K562 (cell line): ENCODE measurements at regions of chr10 and their contacts with region 1.

Region 1: DNA sequence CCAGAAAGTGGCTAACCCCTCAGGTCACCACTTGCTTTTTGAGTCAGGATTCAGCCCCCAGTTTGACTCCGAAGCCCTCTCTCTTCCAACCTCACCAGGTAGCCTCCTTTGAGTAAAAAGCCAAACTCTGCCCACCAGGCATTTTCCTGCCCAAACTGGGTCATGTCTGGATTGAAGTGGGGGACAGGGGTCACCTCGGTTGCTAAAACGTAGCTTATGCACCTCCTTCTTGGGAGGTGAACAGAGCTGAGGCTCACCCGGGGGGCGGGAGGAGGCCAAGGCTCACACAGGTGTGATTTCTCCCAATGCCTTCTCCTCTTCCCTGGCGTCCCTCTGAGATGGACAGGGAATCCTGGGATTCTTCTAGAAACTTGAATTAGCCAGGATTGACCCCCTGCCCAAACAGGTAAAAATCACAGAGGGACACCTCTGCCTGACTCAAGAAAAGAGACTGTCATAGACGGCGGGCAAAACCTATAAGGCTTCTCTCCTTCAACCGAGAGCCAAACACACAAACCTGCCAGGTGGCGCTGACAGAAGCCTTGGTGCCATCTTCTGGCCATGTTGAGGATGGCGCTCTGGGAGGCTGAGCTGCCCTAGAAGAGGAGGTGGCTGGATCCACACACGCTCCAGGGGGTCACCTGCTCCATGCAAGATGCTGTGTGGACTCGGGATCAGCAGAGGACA is 51.6 kb downstream of the PRLHR start:
- DNase-seq: peak; percentile 19 to 58 (median 38)
- ATAC-seq: peak; percentile 92
- H3K4me3 ChIP-seq: no peak overlapping the region
- H3K27ac ChIP-seq: no peak overlapping the region
- H3K4me1 ChIP-seq: no peaks in the 10 kb centered on the region
- H3K27me3 ChIP-seq: peaks cover 0 to 5% of the 10 kb centered on the region in 2 experiments; a peak in 1 of 5 replicates
- CTCF ChIP-seq: peak; percentile 69 to 86 (median 77)
- EP300 ChIP-seq: no peak
- POLR2A ChIP-seq: no peak
- RAD21 ChIP-seq: peak; percentile 72 to 82

Region 2: DNA sequence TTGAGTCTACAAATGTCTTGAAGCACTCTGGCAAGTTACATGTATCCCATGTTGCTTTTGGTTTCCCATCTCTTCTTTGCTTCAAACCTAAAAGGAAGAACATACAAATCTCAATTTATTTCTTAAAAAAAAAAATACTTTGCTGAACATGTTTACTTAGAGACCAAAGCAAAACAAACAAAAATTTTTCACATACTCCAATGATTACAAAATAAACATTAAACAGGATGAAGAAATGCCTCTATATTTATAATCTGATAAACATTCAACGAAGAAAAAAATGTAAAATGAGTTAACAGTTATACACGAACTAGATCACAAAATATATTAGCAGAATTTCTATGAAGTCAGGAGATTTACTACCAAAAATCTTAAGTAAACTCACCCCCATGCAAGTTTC is 233.0 kb before region 1 on chr10:
- CTCF ChIA-PET with region 1: no interaction called
- POLR2A ChIA-PET with region 1: no interaction called
- in situ Hi-C with region 1: no loop called
- intact Hi-C with region 1: loop called (anchors 10 kb)
- DNase-seq: no peak
- ATAC-seq: no peak
- H3K4me3 ChIP-seq: no peak overlapping the region
- H3K27ac ChIP-seq: no peak overlapping the region
- H3K4me1 ChIP-seq: no peaks in the 10 kb centered on the region
- H3K27me3 ChIP-seq: no peaks in the 10 kb centered on the region
- CTCF ChIP-seq: no peak
- EP300 ChIP-seq: no peak
- POLR2A ChIP-seq: no peak
- RAD21 ChIP-seq: no peak

Region 3: DNA sequence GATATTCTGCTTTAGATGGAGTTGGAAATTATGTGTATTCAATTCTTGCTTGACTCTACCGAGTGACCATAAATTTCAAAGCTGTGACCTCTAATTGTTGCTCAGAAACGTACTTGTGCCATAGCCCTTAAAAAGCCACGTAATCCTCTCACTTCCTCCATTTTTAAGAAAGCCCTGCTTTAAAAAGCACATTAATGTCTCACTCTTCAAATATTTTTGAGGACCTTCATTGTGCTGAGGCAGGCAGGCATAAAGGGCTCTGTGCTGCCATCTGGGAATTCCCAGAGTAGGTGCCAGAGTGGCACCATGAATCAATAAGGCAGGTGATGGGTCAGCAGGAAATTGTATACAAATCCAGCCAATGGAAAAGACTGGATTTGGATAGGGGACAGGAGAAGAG is 104.0 kb before region 1 on chr10:
- CTCF ChIA-PET with region 1: no interaction called
- POLR2A ChIA-PET with region 1: no interaction called
- in situ Hi-C with region 1: no loop called
- intact Hi-C with region 1: no loop called
- DNase-seq: no peak
- ATAC-seq: no peak
- H3K4me3 ChIP-seq: no peak overlapping the region
- H3K27ac ChIP-seq: no peak overlapping the region
- H3K4me1 ChIP-seq: no peaks in the 10 kb centered on the region
- H3K27me3 ChIP-seq: no peaks in the 10 kb centered on the region
- CTCF ChIP-seq: no peak
- EP300 ChIP-seq: no peak
- POLR2A ChIP-seq: no peak
- RAD21 ChIP-seq: no peak

Region 4: GRCh38 chr10:118459726-118460193 is 84.1 kb before region 1 on chr10:
- CTCF ChIA-PET with region 1: no interaction called
- POLR2A ChIA-PET with region 1: no interaction called
- in situ Hi-C with region 1: no loop called
- intact Hi-C with region 1: loop called (anchors 1 kb)
- DNase-seq: peak; percentile 60 to 71 (median 64)
- ATAC-seq: peak; percentile 95
- H3K4me3 ChIP-seq: no peak overlapping the region
- H3K27ac ChIP-seq: no peak overlapping the region
- H3K4me1 ChIP-seq: peaks cover 0 to 2% of the 10 kb centered on the region in 2 experiments; a peak in 1 of 5 replicates
- H3K27me3 ChIP-seq: no peaks in the 10 kb centered on the region
- CTCF ChIP-seq: peak; percentile 61 to 75 (median 70)
- EP300 ChIP-seq: no peak
- POLR2A ChIP-seq: no peak
- RAD21 ChIP-seq: peak; percentile 49 to 75